Activated CD4-positive, alpha-beta T cell treated with anti-CD3 and anti-CD28 coated beads for 36 hours (primary cell): ENCODE measurements at regions of chr2 and their contacts with region 1.

Region 1: GRCh38 chr2:241355983-241356870 is at the start of gene FARP2:
- DNase-seq: peak; percentile 99
- ATAC-seq: peak; percentile 95
- H3K4me3 Mint-ChIP-seq: peak within 1 kb of the TSS; percentile 73
- H3K27ac Mint-ChIP-seq: peak within 1 kb of the TSS; percentile 80
- H3K4me1 Mint-ChIP-seq: peaks cover 48% of the 10 kb centered on the region
- H3K27me3 Mint-ChIP-seq: no peaks in the 10 kb centered on the region
- total RNA-seq, gene FARP2: 29.0 to 30.7 TPM

Region 2: DNA sequence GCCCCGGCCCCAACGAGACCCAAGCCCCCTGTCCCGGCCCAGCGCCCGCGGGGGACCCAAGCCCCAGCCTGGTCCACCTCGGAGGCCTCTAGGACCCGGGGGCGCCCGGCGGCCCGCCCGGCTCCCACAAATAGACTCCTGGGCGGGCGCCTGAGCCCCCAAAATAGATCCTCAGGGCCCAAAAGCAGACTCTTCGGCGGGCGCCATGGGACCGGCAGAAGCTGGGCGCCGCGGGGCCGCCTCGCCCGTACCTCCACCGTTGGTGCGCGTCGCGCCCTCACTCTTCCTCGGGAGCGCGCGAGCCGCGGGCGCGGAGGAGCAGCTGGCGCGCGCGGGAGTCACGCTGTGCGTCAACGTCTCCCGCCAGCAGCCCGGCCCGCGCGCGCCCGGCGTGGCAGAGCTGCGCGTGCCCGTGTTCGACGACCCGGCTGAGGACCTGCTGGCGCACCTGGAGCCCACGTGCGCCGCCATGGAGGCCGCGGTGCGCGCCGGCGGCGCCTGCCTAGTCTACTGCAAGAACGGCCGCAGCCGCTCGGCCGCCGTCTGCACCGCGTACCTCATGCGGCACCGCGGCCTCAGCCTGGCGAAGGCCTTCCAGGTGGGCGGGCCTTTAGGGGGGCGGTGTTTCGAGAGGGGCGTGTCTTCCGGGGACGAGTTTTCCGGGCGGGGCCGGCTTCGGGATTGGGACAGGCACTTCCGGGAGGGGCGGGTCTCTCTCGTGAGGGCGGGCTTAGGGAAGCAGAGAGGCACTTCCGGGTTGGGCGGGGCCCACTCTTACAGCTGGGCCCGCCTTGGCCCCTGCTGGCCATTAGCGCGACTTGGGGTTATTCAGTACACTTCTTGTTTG is 795.5 kb before region 1 on chr2:
- CTCF ChIA-PET with region 1: no interaction called
- POLR2A ChIA-PET with region 1: no interaction called
- intact Hi-C with region 1: loop called (anchors 1 to 10 kb)
- DNase-seq: peak; percentile 100
- ATAC-seq: peak; percentile 60
- H3K4me3 Mint-ChIP-seq: peak overlapping the region; percentile 82
- H3K27ac Mint-ChIP-seq: peak overlapping the region; percentile 89
- H3K4me1 Mint-ChIP-seq: peaks cover 76% of the 10 kb centered on the region
- H3K27me3 Mint-ChIP-seq: no peaks in the 10 kb centered on the region

Region 3: GRCh38 chr2:240832205-240832727 is 524.0 kb before region 1 on chr2:
- CTCF ChIA-PET with region 1: no interaction called
- POLR2A ChIA-PET with region 1: no interaction called
- intact Hi-C with region 1: loop called in 1 of 2 experiments (anchors 1 kb)
- DNase-seq: peak; percentile 98
- ATAC-seq: peak; percentile 96
- H3K4me3 Mint-ChIP-seq: peak overlapping the region; percentile 63
- H3K27ac Mint-ChIP-seq: no peak overlapping the region
- H3K4me1 Mint-ChIP-seq: peaks cover 2% of the 10 kb centered on the region
- H3K27me3 Mint-ChIP-seq: peaks cover 19% of the 10 kb centered on the region

Region 4: DNA sequence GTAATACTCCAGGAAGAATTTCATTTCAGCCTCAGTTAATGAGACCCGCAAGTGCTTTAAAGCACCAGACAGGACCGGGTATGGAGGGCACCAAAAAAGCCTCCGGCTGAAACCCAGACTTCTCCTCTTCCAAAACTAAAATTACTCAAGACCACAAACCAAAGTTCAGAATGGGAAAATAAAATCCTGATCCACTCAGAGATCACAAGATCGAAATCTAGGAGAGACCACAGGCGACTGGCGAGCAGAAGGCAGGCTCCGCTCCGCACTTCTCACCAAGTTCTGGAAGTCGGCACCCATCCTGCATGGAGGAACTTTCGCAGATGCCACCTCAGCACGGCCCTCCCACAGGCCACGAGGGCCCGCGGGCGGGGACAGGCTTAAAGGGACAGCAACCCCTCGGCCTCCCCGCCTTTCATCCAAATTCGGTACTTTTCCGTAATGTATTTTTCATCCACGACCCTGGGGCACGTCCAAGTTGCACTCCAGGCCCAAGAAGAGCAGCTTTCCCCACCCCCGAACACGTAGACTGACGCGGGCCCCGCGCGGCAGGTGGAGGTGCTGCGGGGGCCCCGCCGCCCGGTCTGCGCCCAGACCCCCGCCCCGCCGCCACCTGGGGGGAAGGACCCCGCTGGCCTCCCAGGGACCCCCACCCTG is 84.5 kb before region 1 on chr2:
- CTCF ChIA-PET with region 1: interaction called, 3 read pairs
- POLR2A ChIA-PET with region 1: no interaction called
- intact Hi-C with region 1: loop called in 1 of 2 experiments (anchors 2 kb)
- DNase-seq: peak; percentile 72
- ATAC-seq: peak; percentile 59
- H3K4me3 Mint-ChIP-seq: peak overlapping the region; percentile 77
- H3K27ac Mint-ChIP-seq: peak overlapping the region; percentile 89
- H3K4me1 Mint-ChIP-seq: peaks cover 46% of the 10 kb centered on the region
- H3K27me3 Mint-ChIP-seq: no peaks in the 10 kb centered on the region

Region 5: GRCh38 chr2:241609859-241610793 is 253.9 kb after region 1 on chr2:
- CTCF ChIA-PET with region 1: no interaction called
- POLR2A ChIA-PET with region 1: no interaction called
- intact Hi-C with region 1: loop called (anchors 1 to 10 kb)
- DNase-seq: peak; percentile 96
- ATAC-seq: peak; percentile 100
- H3K4me3 Mint-ChIP-seq: peak overlapping the region; percentile 48
- H3K27ac Mint-ChIP-seq: peak overlapping the region; percentile 67
- H3K4me1 Mint-ChIP-seq: peaks cover 14% of the 10 kb centered on the region
- H3K27me3 Mint-ChIP-seq: no peaks in the 10 kb centered on the region

Region 6: DNA sequence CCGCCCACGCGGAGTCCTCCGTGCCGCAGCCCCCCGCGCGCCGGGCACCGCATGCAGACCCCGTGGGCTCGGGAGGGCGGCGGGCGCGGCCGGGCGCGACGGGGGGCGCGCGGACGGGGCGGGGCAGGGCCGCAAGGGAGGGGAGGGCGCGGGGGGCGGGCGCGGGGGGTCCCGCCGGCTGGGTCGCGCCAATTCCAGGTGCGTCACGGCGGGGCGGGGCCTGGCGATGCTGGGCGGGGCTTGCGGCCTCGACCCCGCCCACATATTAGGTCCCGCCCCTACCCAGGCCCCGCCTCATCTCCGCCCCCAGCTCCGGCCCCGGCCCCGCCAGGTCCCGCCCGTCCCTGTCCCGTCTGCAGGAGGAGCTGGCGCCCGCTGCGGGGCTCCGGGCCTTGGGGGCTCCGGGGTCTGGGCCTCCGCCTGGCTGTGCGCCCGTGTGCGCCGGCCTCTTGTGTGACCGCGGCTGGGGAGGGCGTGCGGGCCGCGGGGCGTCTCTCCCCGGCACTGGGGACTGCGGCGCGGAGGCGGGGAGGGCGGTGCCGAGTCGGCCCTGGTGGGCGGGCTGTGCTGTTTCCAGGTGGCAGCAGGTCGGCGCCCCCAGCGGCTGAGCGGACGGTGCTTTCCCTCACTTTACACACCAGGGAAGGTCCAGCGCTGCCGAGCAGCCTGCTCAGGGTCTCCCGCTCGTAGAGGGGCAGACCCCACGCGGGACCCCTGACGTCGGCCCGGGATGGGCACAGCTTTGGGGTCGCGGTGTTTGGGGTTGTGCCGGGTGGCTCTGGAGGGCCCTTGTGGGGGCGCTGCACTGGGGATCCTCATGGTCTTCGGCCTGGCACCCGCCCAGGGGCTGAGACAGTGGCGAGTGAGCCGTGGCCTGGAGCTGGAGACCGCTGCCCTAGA is 346.2 kb after region 1 on chr2:
- CTCF ChIA-PET with region 1: no interaction called
- POLR2A ChIA-PET with region 1: no interaction called
- intact Hi-C with region 1: loop called (anchors 1 to 5 kb)
- DNase-seq: peak; percentile 94
- ATAC-seq: peak; percentile 70
- H3K4me3 Mint-ChIP-seq: peak overlapping the region; percentile 86
- H3K27ac Mint-ChIP-seq: peak overlapping the region; percentile 75
- H3K4me1 Mint-ChIP-seq: peaks cover 29% of the 10 kb centered on the region
- H3K27me3 Mint-ChIP-seq: no peaks in the 10 kb centered on the region

Region 7: DNA sequence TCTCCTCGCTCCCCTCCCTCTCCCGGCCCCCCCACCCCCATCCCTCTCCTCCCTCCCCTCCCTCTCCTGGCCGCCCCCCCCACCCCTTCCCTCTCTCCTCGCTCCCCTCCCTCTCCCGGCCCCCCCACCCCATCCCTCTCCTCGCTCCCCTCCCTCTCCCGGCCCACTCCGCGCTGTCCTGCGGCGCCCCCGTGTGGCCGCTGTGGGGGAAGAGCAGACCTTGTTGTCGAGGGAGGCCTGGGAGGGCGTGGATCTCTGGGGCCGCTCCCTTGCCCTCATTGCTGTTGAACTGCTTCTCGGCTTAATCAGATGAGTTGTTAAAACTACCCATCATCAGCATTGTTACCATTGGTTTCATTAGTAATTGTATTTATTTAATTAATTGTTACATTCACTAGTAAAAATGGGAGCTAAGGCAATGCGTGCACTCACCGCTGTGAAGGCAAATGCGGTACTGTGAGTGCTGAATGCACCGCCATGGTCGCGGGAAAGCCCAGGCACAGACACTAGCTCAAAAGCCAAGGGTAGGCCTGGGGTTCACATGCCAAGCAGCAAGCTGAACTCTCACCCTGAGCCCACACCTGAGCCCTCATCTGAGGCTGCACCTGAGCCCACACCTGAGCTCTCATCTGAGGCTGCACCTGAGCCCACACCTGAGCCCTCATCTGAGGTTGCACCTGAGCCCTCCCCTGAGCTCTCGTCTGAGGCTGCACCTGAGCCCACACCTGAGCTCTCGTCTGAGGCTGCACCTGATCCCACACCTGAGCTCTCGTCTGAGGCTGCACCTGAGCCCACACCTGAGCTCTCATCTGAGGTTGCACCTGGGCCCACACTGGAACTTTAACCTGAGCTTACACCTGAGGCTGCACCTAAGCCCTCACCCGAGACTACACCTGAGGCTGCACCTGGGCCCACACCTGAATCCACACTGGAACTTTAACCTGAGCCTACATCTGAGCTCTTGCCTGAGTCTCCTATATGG is 522.1 kb after region 1 on chr2:
- CTCF ChIA-PET with region 1: no interaction called
- POLR2A ChIA-PET with region 1: no interaction called
- intact Hi-C with region 1: loop called (anchors 1 to 5 kb)
- DNase-seq: peak; percentile 88
- ATAC-seq: peak; percentile 21
- H3K4me3 Mint-ChIP-seq: no peak overlapping the region
- H3K27ac Mint-ChIP-seq: no peak overlapping the region
- H3K4me1 Mint-ChIP-seq: peaks cover 26% of the 10 kb centered on the region
- H3K27me3 Mint-ChIP-seq: no peaks in the 10 kb centered on the region